ENCODE measurements at regions of chr14 and their contacts with region 1.

Region 1: DNA sequence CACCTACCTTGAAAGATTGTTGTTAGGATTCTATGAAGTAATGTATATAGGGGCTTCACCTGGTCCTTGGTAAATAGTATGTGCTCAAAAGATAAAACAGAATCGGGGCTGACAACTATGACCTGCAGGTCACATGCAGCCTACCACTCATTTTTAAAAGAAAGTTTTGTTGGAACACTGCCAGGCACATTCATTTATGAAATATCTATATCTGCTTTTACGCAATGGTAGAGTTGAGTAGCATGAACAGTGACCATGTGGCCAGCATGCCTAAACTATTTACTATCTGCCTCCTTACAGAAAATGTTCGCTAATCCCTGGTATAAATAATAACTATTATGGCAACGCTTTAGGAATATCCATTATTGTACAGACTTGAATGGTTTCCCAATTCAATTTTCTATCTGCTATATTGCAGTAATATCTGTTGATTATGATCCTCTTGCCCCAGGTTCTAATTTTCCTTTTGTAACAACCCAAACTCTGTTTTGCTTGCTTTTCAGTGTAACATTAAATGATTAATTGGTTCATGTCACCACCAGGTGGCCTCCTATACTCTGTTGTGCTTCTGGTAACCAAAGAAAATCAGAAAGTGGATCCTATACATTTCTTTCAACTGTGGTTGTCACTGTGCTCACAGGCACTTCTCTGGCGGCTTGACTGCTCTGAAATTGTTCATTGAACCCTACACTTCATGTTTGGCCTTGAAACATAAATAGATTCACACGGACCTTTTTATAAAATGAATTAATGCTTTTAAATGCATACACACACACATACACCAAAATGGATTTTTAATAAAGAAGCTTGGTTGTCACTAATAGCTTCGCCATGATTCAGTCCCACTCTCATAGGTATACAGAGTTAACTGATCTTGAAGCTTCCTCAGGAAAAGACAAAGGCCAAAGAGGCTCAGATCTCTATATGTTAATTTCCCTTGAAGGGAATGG is 227.7 kb upstream of the NPAS3 start:
- DNase-seq: peak; percentile 22
- H3K4me3 ChIP-seq: no peak overlapping the region
- H3K27ac ChIP-seq: no peak overlapping the region
- H3K4me1 ChIP-seq: no peaks in the 10 kb centered on the region
- H3K27me3 ChIP-seq: no peaks in the 10 kb centered on the region
- CTCF ChIP-seq: peak; percentile 44

Region 2: DNA sequence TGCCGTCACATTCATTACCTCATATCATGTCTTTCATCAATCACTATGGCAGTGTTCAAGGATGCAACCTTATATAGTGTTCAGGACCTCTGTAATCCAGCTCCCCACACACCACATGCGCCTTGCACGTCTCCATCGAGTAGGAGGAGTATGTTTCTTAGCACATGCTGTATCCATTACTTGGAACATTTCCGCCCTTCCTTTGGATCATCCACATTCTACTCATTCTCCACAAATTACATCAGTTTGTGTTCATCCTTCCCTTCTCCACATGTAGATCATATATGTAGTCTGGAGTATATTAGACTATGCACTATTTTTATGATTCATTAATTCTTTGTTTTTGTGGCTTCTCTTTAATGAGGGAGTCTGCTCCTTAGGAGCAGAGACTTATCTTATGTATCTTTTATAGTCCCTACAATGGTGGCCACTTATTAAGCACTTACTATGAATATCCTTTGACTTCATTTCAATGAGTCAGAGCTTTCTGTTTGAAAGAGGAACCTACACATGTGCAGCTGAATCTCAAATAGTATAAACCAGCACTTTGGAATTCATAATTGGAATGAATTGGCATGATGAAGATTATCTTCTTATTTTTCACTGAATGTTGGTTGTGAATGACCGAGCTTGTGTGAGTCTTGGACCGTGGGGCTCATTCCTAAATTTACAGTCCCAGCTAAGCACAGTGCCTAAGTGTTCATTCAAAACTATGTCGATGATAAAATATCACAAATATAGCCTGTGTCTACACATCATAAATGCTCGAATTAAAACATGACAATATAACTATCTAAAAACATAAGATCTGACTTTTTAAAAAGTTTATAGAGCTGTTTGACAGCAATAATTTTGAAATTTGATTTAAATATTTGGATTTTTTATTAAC is 197.4 kb after region 1 on chr14:
- intact Hi-C with region 1: no loop called
- DNase-seq: no peak
- H3K4me3 ChIP-seq: no peak overlapping the region
- H3K27ac ChIP-seq: no peak overlapping the region
- H3K4me1 ChIP-seq: no peaks in the 10 kb centered on the region
- H3K27me3 ChIP-seq: no peaks in the 10 kb centered on the region
- CTCF ChIP-seq: no peak

Region 3: DNA sequence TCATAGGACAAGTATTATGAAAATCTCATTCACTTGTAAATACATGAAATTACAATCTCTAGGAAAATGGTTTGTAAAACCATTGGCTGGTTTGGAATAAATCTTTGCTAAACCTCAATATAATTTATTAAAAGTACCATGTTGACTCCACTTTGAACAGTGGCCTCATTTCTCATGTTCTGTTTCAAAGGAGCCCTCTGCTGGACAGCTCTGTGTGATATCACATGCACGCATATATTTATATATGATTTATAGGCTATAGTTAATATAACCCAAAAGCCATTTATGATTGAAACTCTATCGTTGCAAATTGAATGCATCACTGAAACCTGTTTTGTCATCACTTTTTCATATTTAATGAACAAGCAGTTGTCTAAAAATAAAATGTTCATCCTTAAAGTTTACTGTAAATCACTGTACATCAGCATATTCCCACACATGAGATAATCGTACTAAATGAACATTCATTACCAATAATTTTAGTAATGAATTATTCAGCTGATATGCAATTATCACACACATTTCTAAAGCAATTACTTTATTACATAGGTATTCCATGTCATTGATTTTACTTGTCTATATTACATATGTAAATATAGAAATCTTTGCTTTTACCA is 721.5 kb after region 1 on chr14:
- intact Hi-C with region 1: loop called (anchors 10 kb)
- DNase-seq: no peak
- H3K4me3 ChIP-seq: no peak overlapping the region
- H3K27ac ChIP-seq: no peak overlapping the region
- H3K4me1 ChIP-seq: no peaks in the 10 kb centered on the region
- H3K27me3 ChIP-seq: no peaks in the 10 kb centered on the region
- CTCF ChIP-seq: peak; percentile 47

Region 4: DNA sequence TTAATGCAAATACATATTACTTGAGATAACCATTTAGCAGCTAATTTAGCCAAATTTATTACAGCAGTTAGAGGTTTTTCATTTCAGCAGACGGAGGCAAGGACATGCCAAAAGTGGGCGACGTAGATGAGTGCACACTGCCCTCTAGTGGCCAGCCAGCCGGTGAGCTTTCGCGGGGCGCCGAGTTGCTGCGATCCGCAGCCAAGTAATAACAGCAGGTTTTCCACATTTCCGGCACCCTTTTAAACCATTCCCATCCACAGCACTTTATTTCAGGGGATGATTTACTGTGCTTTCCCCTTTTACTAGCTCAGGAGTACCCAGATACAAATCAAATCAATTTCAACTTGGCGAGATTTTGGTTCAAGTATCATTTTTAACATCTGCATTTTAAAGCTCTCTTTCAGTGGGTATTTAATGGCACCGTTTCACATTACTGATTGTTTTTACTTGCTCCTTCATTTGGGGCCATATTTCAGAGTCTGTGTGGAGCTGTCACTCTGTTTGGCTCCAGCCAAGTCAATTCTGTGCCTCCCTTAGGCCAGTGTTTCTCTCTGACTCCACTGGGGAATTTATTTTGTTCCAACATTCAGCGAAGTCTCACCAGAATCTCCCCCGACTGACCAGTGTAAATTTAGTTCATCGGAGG is 1081.8 kb after region 1 on chr14:
- intact Hi-C with region 1: loop called (anchors 10 kb)
- DNase-seq: peak; percentile 76
- H3K4me3 ChIP-seq: no peak overlapping the region
- H3K27ac ChIP-seq: no peak overlapping the region
- H3K4me1 ChIP-seq: no peaks in the 10 kb centered on the region
- H3K27me3 ChIP-seq: no peaks in the 10 kb centered on the region
- CTCF ChIP-seq: peak; percentile 89